Endothelial cell of umbilical vein (primary cell): ENCODE measurements at regions of chr12 and their contacts with region 1.

Region 1: GRCh38 chr12:71415336-71416231 is 24.0 kb upstream of the LGR5 start:
- DNase-seq: peak; percentile 49
- H3K4me3 ChIP-seq: no peak overlapping the region
- H3K27ac ChIP-seq: no peak overlapping the region
- H3K4me1 ChIP-seq: no peaks in the 10 kb centered on the region
- H3K27me3 ChIP-seq: no peaks in the 10 kb centered on the region
- CTCF ChIP-seq: peak; percentile 55 to 67
- POLR2A ChIP-seq: no peak

Region 2: GRCh38 chr12:71426300-71427047 is 10.9 kb after region 1 on chr12:
- CTCF ChIA-PET with region 1: interaction called, 10 read pairs
- POLR2A ChIA-PET with region 1: no interaction called
- dilution Hi-C with region 1: no loop called
- intact Hi-C with region 1: no loop called
- DNase-seq: no peak
- H3K4me3 ChIP-seq: no peak overlapping the region
- H3K27ac ChIP-seq: no peak overlapping the region
- H3K4me1 ChIP-seq: no peaks in the 10 kb centered on the region
- H3K27me3 ChIP-seq: peaks cover 0 to 14% of the 10 kb centered on the region in 2 experiments
- CTCF ChIP-seq: no peak
- POLR2A ChIP-seq: no peak

Region 3: GRCh38 chr12:71551529-71551928 is 135.9 kb after region 1 on chr12:
- CTCF ChIA-PET with region 1: interaction called, 6 read pairs
- POLR2A ChIA-PET with region 1: no interaction called
- dilution Hi-C with region 1: no loop called
- intact Hi-C with region 1: loop called (anchors 1 kb)
- DNase-seq: peak; percentile 6
- H3K4me3 ChIP-seq: no peak overlapping the region
- H3K27ac ChIP-seq: no peak overlapping the region
- H3K4me1 ChIP-seq: no peaks in the 10 kb centered on the region
- H3K27me3 ChIP-seq: no peaks in the 10 kb centered on the region
- CTCF ChIP-seq: peak in 1 of 2 donors; percentile 12
- POLR2A ChIP-seq: no peak